Sigmoid colon (tissue), 7 donors: ENCODE measurements at regions of chr7 and their contacts with region 1.

Region 1: GRCh38 chr7:135801045-135801693 is 52.6 kb upstream of the FAM180A start:
- DNase-seq: no peak
- H3K4me3 ChIP-seq: no peak overlapping the region
- H3K27ac ChIP-seq: no peak overlapping the region
- H3K4me1 ChIP-seq: peaks cover 0 to 29% (median 14%) of the 10 kb centered on the region in 4 donors
- H3K27me3 ChIP-seq: no peaks in the 10 kb centered on the region
- CTCF ChIP-seq: peak; percentile 66 to 75 (median 74)
- EP300 ChIP-seq: no peak
- POLR2A ChIP-seq: no peak

Region 2: GRCh38 chr7:136009488-136010079 is 208.4 kb after region 1 on chr7:
- intact Hi-C with region 1: loop called (anchors 1 kb)
- DNase-seq: no peak
- H3K4me3 ChIP-seq: no peak overlapping the region
- H3K27ac ChIP-seq: no peak overlapping the region
- H3K4me1 ChIP-seq: peaks cover 0 to 5% (median 2%) of the 10 kb centered on the region in 4 donors
- H3K27me3 ChIP-seq: no peaks in the 10 kb centered on the region
- CTCF ChIP-seq: peak; percentile 56 to 73 (median 64)
- EP300 ChIP-seq: no peak
- POLR2A ChIP-seq: no peak

Region 3: GRCh38 chr7:136868496-136869000 is 1067.4 kb after region 1 on chr7 and contains the start of gene CHRM2:
- intact Hi-C with region 1: loop called (anchors 10 kb)
- DNase-seq: peak; percentile 64
- H3K4me3 ChIP-seq: peak within 1 kb of the TSS; percentile 77 to 86 (median 82)
- H3K27ac ChIP-seq: peak within 1 kb of the TSS; percentile 46 to 91 (median 90)
- H3K4me1 ChIP-seq: peaks cover 0 to 38% (median 23%) of the 10 kb centered on the region in 4 donors
- H3K27me3 ChIP-seq: no peaks in the 10 kb centered on the region
- CTCF ChIP-seq: no peak
- EP300 ChIP-seq: no peak
- POLR2A ChIP-seq: no peak
- total RNA-seq, gene CHRM2: 94.8 to 121 (median 100) TPM

Region 4: GRCh38 chr7:137096607-137097006 is 1295.4 kb after region 1 on chr7:
- intact Hi-C with region 1: no loop called
- DNase-seq: no peak
- H3K4me3 ChIP-seq: no peak overlapping the region
- H3K27ac ChIP-seq: no peak overlapping the region
- H3K4me1 ChIP-seq: no peaks in the 10 kb centered on the region
- H3K27me3 ChIP-seq: no peaks in the 10 kb centered on the region
- CTCF ChIP-seq: no peak
- EP300 ChIP-seq: no peak
- POLR2A ChIP-seq: no peak

Region 5: GRCh38 chr7:137169282-137169698 is 1368.1 kb after region 1 on chr7:
- intact Hi-C with region 1: loop called (anchors 10 kb)
- DNase-seq: peak; percentile 87
- H3K4me3 ChIP-seq: no peak overlapping the region
- H3K27ac ChIP-seq: peak overlapping the region in 2 of 4 donors; percentile 37 to 39
- H3K4me1 ChIP-seq: peaks cover 0 to 19% (median 6%) of the 10 kb centered on the region in 4 donors
- H3K27me3 ChIP-seq: no peaks in the 10 kb centered on the region
- CTCF ChIP-seq: peak; percentile 71 to 86 (median 78)
- EP300 ChIP-seq: no peak
- POLR2A ChIP-seq: no peak

Region 6: GRCh38 chr7:137454246-137454724 is 1653.1 kb after region 1 on chr7:
- intact Hi-C with region 1: loop called (anchors 10 kb)
- DNase-seq: no peak
- H3K4me3 ChIP-seq: peak overlapping the region in 2 of 4 donors; percentile 6 to 11
- H3K27ac ChIP-seq: peak overlapping the region; percentile 53 to 74 (median 70)
- H3K4me1 ChIP-seq: peaks cover 0 to 20% (median 6%) of the 10 kb centered on the region in 4 donors
- H3K27me3 ChIP-seq: no peaks in the 10 kb centered on the region
- CTCF ChIP-seq: peak; percentile 63 to 69 (median 66)
- EP300 ChIP-seq: no peak
- POLR2A ChIP-seq: no peak

Region 7: GRCh38 chr7:137592232-137592896 is 1791.2 kb after region 1 on chr7:
- intact Hi-C with region 1: loop called (anchors 5 kb)
- DNase-seq: peak; percentile 80
- H3K4me3 ChIP-seq: no peak overlapping the region
- H3K27ac ChIP-seq: peak overlapping the region in 3 of 4 donors; percentile 56 to 63 (median 57)
- H3K4me1 ChIP-seq: peaks cover 0 to 36% (median 32%) of the 10 kb centered on the region in 4 donors
- H3K27me3 ChIP-seq: no peaks in the 10 kb centered on the region
- CTCF ChIP-seq: peak; percentile 64 to 83 (median 72)
- EP300 ChIP-seq: no peak
- POLR2A ChIP-seq: no peak